Panc1 (cell line): ENCODE measurements at regions of chr6 and their contacts with region 1.

Region 1: DNA sequence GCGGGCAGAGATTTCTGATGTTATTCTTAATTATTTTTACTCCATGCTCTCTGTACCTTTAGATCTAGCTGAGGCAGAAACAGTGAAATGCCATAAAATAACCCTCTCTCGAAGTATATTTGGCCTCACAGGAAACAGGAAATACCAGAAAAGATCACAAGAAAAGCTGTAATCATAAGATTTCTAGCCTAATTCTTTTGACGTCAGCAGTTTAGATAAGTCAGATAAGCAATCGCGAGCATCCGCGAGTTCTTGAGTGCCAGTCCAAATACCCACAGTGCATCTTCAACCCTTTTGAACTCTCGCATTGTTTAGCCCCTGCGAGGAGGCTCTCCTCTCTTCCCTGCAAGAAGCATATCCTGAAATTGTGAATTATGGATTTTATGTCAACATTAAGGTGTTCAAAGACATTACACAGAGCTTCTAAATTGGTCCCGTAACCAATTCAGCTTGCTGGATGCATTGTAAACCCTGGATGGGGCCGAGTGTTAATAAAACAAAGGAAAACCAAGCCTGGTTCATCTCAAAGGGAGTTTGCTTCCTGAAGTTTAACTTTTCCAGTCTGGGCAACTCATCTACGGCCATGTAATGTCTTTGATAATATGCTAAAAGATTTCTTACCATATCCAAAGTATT is 198.9 kb downstream of the MTFR2 start:
- DNase-seq: no peak
- ATAC-seq: no peak
- H3K4me3 ChIP-seq: no peak overlapping the region
- H3K27ac ChIP-seq: no peak overlapping the region
- H3K4me1 ChIP-seq: no peaks in the 10 kb centered on the region
- H3K27me3 ChIP-seq: no peaks in the 10 kb centered on the region
- CTCF ChIP-seq: no peak

Region 2: GRCh38 chr6:136014454-136015421 is 36.5 kb before region 1 on chr6:
- CTCF ChIA-PET with region 1: no interaction called
- POLR2A ChIA-PET with region 1: no interaction called
- in situ Hi-C with region 1: no loop called
- intact Hi-C with region 1: no loop called
- DNase-seq: no peak
- ATAC-seq: no peak
- H3K4me3 ChIP-seq: no peak overlapping the region
- H3K27ac ChIP-seq: no peak overlapping the region
- H3K4me1 ChIP-seq: no peaks in the 10 kb centered on the region
- H3K27me3 ChIP-seq: no peaks in the 10 kb centered on the region
- CTCF ChIP-seq: no peak

Region 3: GRCh38 chr6:136037876-136038460 is 13.3 kb before region 1 on chr6:
- CTCF ChIA-PET with region 1: no interaction called
- POLR2A ChIA-PET with region 1: no interaction called
- in situ Hi-C with region 1: no loop called
- intact Hi-C with region 1: no loop called
- DNase-seq: no peak
- ATAC-seq: peak; percentile 48
- H3K4me3 ChIP-seq: peak overlapping the region in 1 of 2 experiments; percentile 13; a peak in 1 of 4 replicates
- H3K27ac ChIP-seq: no peak overlapping the region
- H3K4me1 ChIP-seq: no peaks in the 10 kb centered on the region
- H3K27me3 ChIP-seq: no peaks in the 10 kb centered on the region
- CTCF ChIP-seq: peak; percentile 10; the same call in 1 of the 2 replicates

Region 4: GRCh38 chr6:136289579-136290409 is 238.5 kb after region 1 on chr6 and contains the start of gene BCLAF1:
- CTCF ChIA-PET with region 1: no interaction called
- POLR2A ChIA-PET with region 1: interaction called, 10 read pairs
- in situ Hi-C with region 1: no loop called
- intact Hi-C with region 1: no loop called
- DNase-seq: peak; percentile 96
- ATAC-seq: peak; percentile 96
- H3K4me3 ChIP-seq: peak within 1 kb of the TSS; percentile 97 to 99
- H3K27ac ChIP-seq: peak within 1 kb of the TSS; percentile 91
- H3K4me1 ChIP-seq: peaks cover 17% of the 10 kb centered on the region; the same call in 1 of the 2 replicates
- H3K27me3 ChIP-seq: no peaks in the 10 kb centered on the region
- CTCF ChIP-seq: no peak
- total RNA-seq, gene BCLAF1: 151 TPM